Heart left ventricle (tissue), 16 donors: ENCODE measurements at regions of chr3 and their contacts with region 1.

Region 1: DNA sequence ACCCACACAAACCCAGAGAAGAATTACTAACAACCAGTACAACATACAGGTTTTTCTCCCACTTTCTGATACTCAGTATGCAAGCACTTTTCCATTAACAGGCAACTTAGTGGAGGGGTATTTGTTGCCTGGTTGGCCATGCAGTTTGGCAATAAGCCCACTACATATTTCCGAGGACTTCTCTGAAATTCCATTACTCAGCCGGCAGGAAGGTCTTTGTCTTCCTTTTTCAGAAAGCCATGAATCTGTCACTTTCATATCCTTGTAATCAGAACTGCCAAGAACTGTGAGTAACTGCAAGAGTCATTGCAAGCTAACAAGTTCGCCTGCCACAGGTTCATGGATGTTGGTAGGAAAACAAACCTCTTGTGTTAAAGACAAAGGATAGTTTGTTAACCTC is 422.3 kb upstream of the ROBO1 start:
- DNase-seq: no peak
- ATAC-seq: no peak
- H3K4me3 ChIP-seq: no peak overlapping the region
- H3K27ac ChIP-seq: no peak overlapping the region
- H3K4me1 ChIP-seq: no peaks in the 10 kb centered on the region
- H3K27me3 ChIP-seq: no peaks in the 10 kb centered on the region
- CTCF ChIP-seq: no peak
- POLR2A ChIP-seq: no peak

Region 2: GRCh38 chr3:79937567-79937966 is 252.5 kb before region 1 on chr3:
- intact Hi-C with region 1: loop called in 1 of 10 experiments (anchors 10 kb)
- DNase-seq: no peak
- ATAC-seq: no peak
- H3K4me3 ChIP-seq: no peak overlapping the region
- H3K27ac ChIP-seq: no peak overlapping the region
- H3K4me1 ChIP-seq: no peaks in the 10 kb centered on the region
- H3K27me3 ChIP-seq: no peaks in the 10 kb centered on the region
- CTCF ChIP-seq: no peak
- POLR2A ChIP-seq: no peak

Region 3: GRCh38 chr3:80227216-80227615 is 37.2 kb after region 1 on chr3:
- intact Hi-C with region 1: no loop called
- DNase-seq: no peak
- ATAC-seq: no peak
- H3K4me3 ChIP-seq: no peak overlapping the region
- H3K27ac ChIP-seq: no peak overlapping the region
- H3K4me1 ChIP-seq: no peaks in the 10 kb centered on the region
- H3K27me3 ChIP-seq: no peaks in the 10 kb centered on the region
- CTCF ChIP-seq: no peak
- POLR2A ChIP-seq: no peak